Activated CD4-positive, alpha-beta memory T cell treated with anti-CD3 and anti-CD28 coated beads, Interleukin-2, amount 10 ng/mL, durations not matched to agents 7 days and 5 days (primary cell): ENCODE measurements at regions of chr6 and their contacts with region 1.

Region 1: GRCh38 chr6:30821862-30822782 is 62.2 kb upstream of the DDR1 start:
- DNase-seq: no peak
- H3K4me3 Mint-ChIP-seq: no peak overlapping the region
- H3K27ac Mint-ChIP-seq: no peak overlapping the region
- H3K4me1 Mint-ChIP-seq: peaks cover 56% of the 10 kb centered on the region
- H3K27me3 Mint-ChIP-seq: no peaks in the 10 kb centered on the region

Region 2: GRCh38 chr6:30810813-30811329 is 11.3 kb before region 1 on chr6:
- CTCF ChIA-PET with region 1: interaction called, 24 read pairs
- POLR2A ChIA-PET with region 1: interaction called, 4 read pairs
- DNase-seq: peak; percentile 33
- H3K4me3 Mint-ChIP-seq: no peak overlapping the region
- H3K27ac Mint-ChIP-seq: no peak overlapping the region
- H3K4me1 Mint-ChIP-seq: peaks cover 49% of the 10 kb centered on the region
- H3K27me3 Mint-ChIP-seq: peaks cover 2% of the 10 kb centered on the region

Region 3: DNA sequence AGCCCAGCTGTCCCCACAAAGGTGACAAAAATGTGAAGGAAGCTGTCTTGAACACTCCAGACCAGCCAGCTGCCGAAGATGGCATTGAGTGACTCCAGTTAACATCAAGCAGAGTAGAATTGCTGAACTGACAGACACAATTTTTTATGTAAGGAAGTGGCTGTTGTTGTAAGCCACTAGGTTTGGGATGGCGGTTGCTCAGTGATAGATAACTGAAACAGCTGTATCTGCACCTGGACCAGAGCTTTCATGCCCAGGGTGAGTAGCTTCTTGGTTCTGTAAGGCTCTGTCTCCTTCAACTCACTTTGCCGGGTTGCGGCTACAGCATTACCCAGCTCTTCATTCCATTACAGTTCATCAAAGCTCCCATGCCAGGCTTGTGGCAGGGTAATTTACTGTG is 12.5 kb after region 1 on chr6:
- CTCF ChIA-PET with region 1: interaction called, 21 read pairs
- POLR2A ChIA-PET with region 1: interaction called, 5 read pairs
- DNase-seq: no peak
- H3K4me3 Mint-ChIP-seq: no peak overlapping the region
- H3K27ac Mint-ChIP-seq: peak overlapping the region; percentile 69
- H3K4me1 Mint-ChIP-seq: peaks cover 33% of the 10 kb centered on the region
- H3K27me3 Mint-ChIP-seq: peaks cover 2% of the 10 kb centered on the region

Region 4: GRCh38 chr6:30877419-30878371 is 55.6 kb after region 1 on chr6:
- CTCF ChIA-PET with region 1: interaction called, 82 read pairs
- POLR2A ChIA-PET with region 1: no interaction called
- DNase-seq: peak; percentile 77
- H3K4me3 Mint-ChIP-seq: peak overlapping the region; percentile 49
- H3K27ac Mint-ChIP-seq: no peak overlapping the region
- H3K4me1 Mint-ChIP-seq: peaks cover 11% of the 10 kb centered on the region
- H3K27me3 Mint-ChIP-seq: peaks cover 8% of the 10 kb centered on the region

Region 5: DNA sequence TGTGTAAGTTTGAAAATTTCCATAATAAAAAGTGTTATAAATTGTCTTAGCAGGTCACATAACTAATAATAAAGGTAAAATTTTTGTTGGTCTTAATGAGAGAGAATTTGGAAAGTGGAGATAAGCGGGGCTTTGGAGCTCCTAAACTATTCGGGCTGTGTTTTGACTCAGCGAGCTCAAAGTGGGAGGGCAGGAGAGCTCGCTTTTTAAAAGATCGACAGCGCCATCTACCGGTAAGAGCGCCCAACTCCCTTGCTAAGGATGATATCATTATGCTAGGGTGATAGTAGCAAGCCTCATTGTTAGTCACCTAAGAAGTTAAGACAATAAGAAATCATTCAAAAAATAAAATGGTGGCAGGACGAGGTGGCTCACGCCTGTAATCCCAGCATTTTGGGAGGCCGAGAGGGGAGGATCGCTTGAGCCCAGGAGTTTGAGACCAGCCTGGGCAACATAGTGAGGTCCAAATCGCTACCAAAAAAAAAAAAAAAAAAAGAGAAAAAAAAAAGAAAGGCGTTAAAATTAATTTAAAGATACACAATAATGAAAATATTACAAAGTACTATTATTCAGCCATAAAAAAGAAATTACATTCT is 265.5 kb after region 1 on chr6:
- CTCF ChIA-PET with region 1: interaction called, 10 read pairs
- POLR2A ChIA-PET with region 1: interaction called, 3 read pairs
- DNase-seq: peak; percentile 88
- H3K4me3 Mint-ChIP-seq: no peak overlapping the region
- H3K27ac Mint-ChIP-seq: no peak overlapping the region
- H3K4me1 Mint-ChIP-seq: peaks cover 15% of the 10 kb centered on the region
- H3K27me3 Mint-ChIP-seq: peaks cover 14% of the 10 kb centered on the region